Transverse colon (tissue), 4 donors: ENCODE measurements at regions of chr11 and their contacts with region 1.

Region 1: GRCh38 chr11:92826136-92826535 is 143.3 kb upstream of the MTNR1B start:
- DNase-seq: no peak
- H3K4me3 ChIP-seq: no peak overlapping the region
- H3K27ac ChIP-seq: no peak overlapping the region
- H3K4me1 ChIP-seq: peaks cover 0 to 4% (median 0%) of the 10 kb centered on the region in 4 donors
- H3K27me3 ChIP-seq: no peaks in the 10 kb centered on the region
- CTCF ChIP-seq: no peak
- EP300 ChIP-seq: no peak
- POLR2A ChIP-seq: no peak

Region 2: GRCh38 chr11:92803391-92803790 is 22.7 kb before region 1 on chr11:
- in situ Hi-C with region 1: no loop called
- intact Hi-C with region 1: loop called (anchors 1 kb)
- DNase-seq: no peak
- H3K4me3 ChIP-seq: no peak overlapping the region
- H3K27ac ChIP-seq: no peak overlapping the region
- H3K4me1 ChIP-seq: no peaks in the 10 kb centered on the region
- H3K27me3 ChIP-seq: no peaks in the 10 kb centered on the region
- CTCF ChIP-seq: no peak
- EP300 ChIP-seq: no peak
- POLR2A ChIP-seq: no peak